Left colon (tissue), 2 donors: ENCODE measurements at regions of chr7 and their contacts with region 1.

Region 1: DNA sequence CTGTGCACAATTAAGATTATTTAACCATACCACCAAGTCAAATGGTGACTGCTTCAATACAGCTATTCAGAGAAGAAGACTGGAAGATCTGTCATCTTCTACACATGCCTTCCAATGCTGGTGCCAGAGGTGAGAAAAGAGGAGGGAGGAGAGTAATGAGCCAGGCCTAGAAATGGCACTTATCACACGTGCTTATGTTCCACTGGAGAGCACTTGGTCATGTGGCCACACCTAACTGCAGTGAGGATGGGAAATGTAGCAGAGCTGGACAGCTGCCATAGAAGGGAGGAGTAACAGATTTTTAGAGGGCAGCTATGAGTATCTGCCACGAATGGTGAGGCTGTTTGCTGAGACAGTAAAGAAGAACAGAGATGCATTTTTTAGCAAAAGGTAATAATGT is 77.1 kb downstream of the MPLKIP start:
- DNase-seq: peak; percentile 44 to 45
- ATAC-seq: peak; percentile 91

Region 2: GRCh38 chr7:39894904-39895303 is 162.4 kb before region 1 on chr7:
- intact Hi-C with region 1: loop called in 1 of 2 experiments (anchors 5 kb)
- DNase-seq: no peak
- ATAC-seq: no peak